HEK293 (cell line): ENCODE measurements at regions of chr10 and their contacts with region 1.

Region 1: GRCh38 chr10:67849331-67850011 is 11.5 kb upstream of the DNAJC12 start:
- H3K4me3 ChIP-seq: peak overlapping the region; percentile 76
- H3K27ac ChIP-seq: peak overlapping the region; percentile 59
- H3K4me1 ChIP-seq: no peaks in the 10 kb centered on the region
- CTCF ChIP-seq: no peak

Region 2: DNA sequence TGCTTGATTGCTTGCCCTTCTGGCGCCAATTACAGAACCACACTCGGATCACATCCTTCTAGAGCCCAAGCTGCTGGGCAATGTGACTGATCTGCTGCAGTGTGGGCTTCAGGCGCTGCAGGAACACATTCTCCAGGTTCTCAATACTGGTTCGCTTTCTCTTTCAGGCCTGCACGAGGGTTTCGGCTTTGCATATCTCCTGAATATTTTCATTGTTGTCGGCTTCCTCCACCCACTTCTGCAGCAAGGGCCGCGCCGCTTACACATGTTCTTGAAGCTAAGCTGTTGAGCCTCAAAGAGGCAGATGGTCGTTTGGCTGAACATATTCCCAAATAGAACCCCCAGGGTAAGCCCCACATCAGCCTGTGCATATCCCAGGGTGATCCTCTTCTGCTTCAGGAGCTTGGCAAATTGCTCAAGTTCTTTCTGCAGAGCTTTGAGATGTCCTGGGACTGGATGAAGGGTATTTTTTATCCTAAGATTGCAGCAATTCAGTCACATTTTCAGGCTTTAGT is 161.0 kb after region 1 on chr10:
- CTCF ChIA-PET with region 1: no interaction called
- POLR2A ChIA-PET with region 1: no interaction called
- H3K4me3 ChIP-seq: no peak overlapping the region
- H3K27ac ChIP-seq: no peak overlapping the region
- H3K4me1 ChIP-seq: no peaks in the 10 kb centered on the region
- CTCF ChIP-seq: no peak

Region 3: DNA sequence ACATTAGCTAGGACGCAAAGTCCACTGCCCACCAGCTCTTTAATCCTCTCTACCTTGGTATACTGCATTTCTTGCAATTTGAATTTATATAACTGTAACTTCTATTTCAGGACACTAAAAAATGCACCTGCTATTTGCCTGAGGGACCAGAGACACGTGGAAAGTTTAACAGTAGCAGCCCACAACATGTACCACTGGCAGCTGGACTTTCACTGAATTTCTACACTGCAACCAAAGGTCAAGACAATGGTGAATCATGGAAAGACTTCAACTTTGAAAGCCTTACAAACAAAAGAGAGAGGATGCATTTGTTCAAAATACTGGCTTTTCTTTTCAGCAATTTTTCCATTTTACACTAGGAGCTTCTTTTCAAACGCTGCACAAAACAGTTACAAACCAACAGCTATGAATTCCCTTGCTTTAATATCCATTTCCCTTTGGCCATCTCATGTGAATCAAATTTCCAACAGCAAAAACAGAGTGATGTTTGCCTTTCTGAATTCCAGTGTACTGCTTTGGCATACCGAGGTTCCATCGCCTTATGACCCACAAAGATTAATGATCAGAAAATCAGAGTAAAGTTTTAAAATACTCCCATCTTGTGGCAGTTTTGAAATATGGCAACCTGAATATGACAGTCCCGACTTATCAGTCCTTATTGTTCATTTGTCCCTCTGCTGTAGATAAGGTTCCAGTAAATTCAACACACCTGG is 452.5 kb after region 1 on chr10:
- CTCF ChIA-PET with region 1: interaction called, 16 read pairs
- POLR2A ChIA-PET with region 1: no interaction called
- H3K4me3 ChIP-seq: no peak overlapping the region
- H3K27ac ChIP-seq: no peak overlapping the region
- H3K4me1 ChIP-seq: no peaks in the 10 kb centered on the region
- CTCF ChIP-seq: no peak